HCT116 (cell line): ENCODE measurements at regions of chr1 and their contacts with region 1.

Region 1: GRCh38 chr1:168342572-168343280 is 62.0 kb downstream of the TBX19 start:
- DNase-seq: peak; percentile 82
- ATAC-seq: peak; percentile 96
- H3K4me3 ChIP-seq: peak overlapping the region in 1 of 2 experiments; percentile 31; a peak in 2 of 4 replicates
- H3K27ac ChIP-seq: peak overlapping the region; percentile 38; the same call in 1 of the 2 replicates
- H3K4me1 ChIP-seq: peaks cover 11 to 21% of the 10 kb centered on the region in 2 experiments; a peak in 3 of 4 replicates
- H3K27me3 ChIP-seq: no peaks in the 10 kb centered on the region
- CTCF ChIP-seq: peak; percentile 58 to 87 (median 65)
- POLR2A ChIP-seq: no peak
- RAD21 ChIP-seq: peak; percentile 98

Region 2: GRCh38 chr1:168234846-168235547 is 107.7 kb before region 1 on chr1:
- CTCF ChIA-PET with region 1: interaction called, 27 read pairs
- POLR2A ChIA-PET with region 1: no interaction called
- RAD21 ChIA-PET with region 1: interaction called in 1 of 2 experiments, 4 read pairs
- intact Hi-C with region 1: no loop called
- DNase-seq: peak; percentile 31
- ATAC-seq: peak; percentile 99
- H3K4me3 ChIP-seq: no peak overlapping the region
- H3K27ac ChIP-seq: no peak overlapping the region
- H3K4me1 ChIP-seq: 0 out of 4 replicates have a peak, but pooled peaks cover 0 to 6% of the 10 kb centered on the region in 2 experiments
- H3K27me3 ChIP-seq: no peaks in the 10 kb centered on the region
- CTCF ChIP-seq: peak; percentile 57 to 86 (median 84); a peak in 5 of 6 replicates
- POLR2A ChIP-seq: no peak
- RAD21 ChIP-seq: peak; percentile 73

Region 3: GRCh38 chr1:168266644-168267186 is 76.0 kb before region 1 on chr1:
- CTCF ChIA-PET with region 1: no interaction called
- POLR2A ChIA-PET with region 1: no interaction called
- RAD21 ChIA-PET with region 1: no interaction called
- intact Hi-C with region 1: no loop called
- DNase-seq: no peak
- ATAC-seq: no peak
- H3K4me3 ChIP-seq: no peak overlapping the region
- H3K27ac ChIP-seq: no peak overlapping the region
- H3K4me1 ChIP-seq: peaks cover 7 to 8% of the 10 kb centered on the region in 2 experiments
- H3K27me3 ChIP-seq: no peaks in the 10 kb centered on the region
- CTCF ChIP-seq: no peak
- POLR2A ChIP-seq: no peak
- RAD21 ChIP-seq: no peak

Region 4: GRCh38 chr1:168365719-168366479 is 23.2 kb after region 1 on chr1:
- CTCF ChIA-PET with region 1: interaction called, 26 read pairs
- POLR2A ChIA-PET with region 1: interaction called, 4 read pairs
- RAD21 ChIA-PET with region 1: interaction called, 3 to 5 read pairs
- intact Hi-C with region 1: no loop called
- DNase-seq: no peak
- ATAC-seq: peak; percentile 87
- H3K4me3 ChIP-seq: no peak overlapping the region
- H3K27ac ChIP-seq: no peak overlapping the region
- H3K4me1 ChIP-seq: peaks cover 7 to 20% of the 10 kb centered on the region in 2 experiments; a peak in 2 of 4 replicates
- H3K27me3 ChIP-seq: no peaks in the 10 kb centered on the region
- CTCF ChIP-seq: peak in 2 of 3 experiments; percentile 30 to 43; a peak in 3 of 6 replicates
- POLR2A ChIP-seq: no peak
- RAD21 ChIP-seq: peak; percentile 44

Region 5: GRCh38 chr1:168439456-168440375 is 97.0 kb after region 1 on chr1:
- CTCF ChIA-PET with region 1: interaction called, 48 read pairs
- POLR2A ChIA-PET with region 1: interaction called, 4 read pairs
- RAD21 ChIA-PET with region 1: interaction called, 8 to 11 read pairs
- intact Hi-C with region 1: loop called (anchors 1 kb)
- DNase-seq: peak; percentile 80
- ATAC-seq: peak; percentile 96
- H3K4me3 ChIP-seq: peak overlapping the region; percentile 13 to 50; a peak in 3 of 4 replicates
- H3K27ac ChIP-seq: no peak overlapping the region; the same call in 1 of the 2 replicates
- H3K4me1 ChIP-seq: peaks cover 17 to 22% of the 10 kb centered on the region in 2 experiments; a peak in 3 of 4 replicates
- H3K27me3 ChIP-seq: no peaks in the 10 kb centered on the region
- CTCF ChIP-seq: peak; percentile 82 to 86 (median 86)
- POLR2A ChIP-seq: no peak
- RAD21 ChIP-seq: peak; percentile 96

Region 6: GRCh38 chr1:168603501-168604110 is 260.9 kb after region 1 on chr1:
- CTCF ChIA-PET with region 1: interaction called, 62 read pairs
- POLR2A ChIA-PET with region 1: interaction called, 5 read pairs
- RAD21 ChIA-PET with region 1: interaction called, 5 to 10 read pairs
- intact Hi-C with region 1: loop called (anchors 10 kb)
- DNase-seq: peak; percentile 56
- ATAC-seq: peak; percentile 98
- H3K4me3 ChIP-seq: no peak overlapping the region
- H3K27ac ChIP-seq: no peak overlapping the region
- H3K4me1 ChIP-seq: no peaks in the 10 kb centered on the region
- H3K27me3 ChIP-seq: no peaks in the 10 kb centered on the region
- CTCF ChIP-seq: peak; percentile 82 to 93 (median 87)
- POLR2A ChIP-seq: no peak
- RAD21 ChIP-seq: peak; percentile 95